ENCODE measurements at regions of chrX and their contacts with region 1.

Region 1: GRCh38 chrX:53284684-53285447 is 3.5 kb upstream of the IQSEC2 start:
- DNase-seq: peak; percentile 59
- ATAC-seq: peak; percentile 46
- H3K4me3 Mint-ChIP-seq: no peak overlapping the region
- H3K27ac Mint-ChIP-seq: no peak overlapping the region
- H3K4me1 Mint-ChIP-seq: peaks cover 34% of the 10 kb centered on the region
- H3K27me3 Mint-ChIP-seq: no peaks in the 10 kb centered on the region

Region 2: GRCh38 chrX:53244610-53245009 is 40.3 kb before region 1 on chrX:
- CTCF ChIA-PET with region 1: no interaction called
- DNase-seq: no peak
- ATAC-seq: no peak
- H3K4me3 Mint-ChIP-seq: no peak overlapping the region
- H3K27ac Mint-ChIP-seq: no peak overlapping the region
- H3K4me1 Mint-ChIP-seq: peaks cover 2% of the 10 kb centered on the region
- H3K27me3 Mint-ChIP-seq: peaks cover 3% of the 10 kb centered on the region

Region 3: GRCh38 chrX:53262918-53263394 is 21.9 kb before region 1 on chrX:
- CTCF ChIA-PET with region 1: interaction called, 14 read pairs
- DNase-seq: peak; percentile 63
- ATAC-seq: peak; percentile 58
- H3K4me3 Mint-ChIP-seq: no peak overlapping the region
- H3K27ac Mint-ChIP-seq: peak overlapping the region; percentile 35
- H3K4me1 Mint-ChIP-seq: peaks cover 44% of the 10 kb centered on the region
- H3K27me3 Mint-ChIP-seq: peaks cover 13% of the 10 kb centered on the region

Region 4: GRCh38 chrX:53433651-53434639 is 149.1 kb after region 1 on chrX and contains the start of gene HSD17B10:
- CTCF ChIA-PET with region 1: interaction called, 11 read pairs
- DNase-seq: peak; percentile 92
- ATAC-seq: peak; percentile 96
- H3K4me3 Mint-ChIP-seq: peak within 1 kb of the TSS; percentile 98
- H3K27ac Mint-ChIP-seq: peak within 1 kb of the TSS; percentile 90
- H3K4me1 Mint-ChIP-seq: peaks cover 43% of the 10 kb centered on the region
- H3K27me3 Mint-ChIP-seq: no peaks in the 10 kb centered on the region
- total RNA-seq, gene HSD17B10: 111 to 147 TPM

Region 5: GRCh38 chrX:53660004-53660403 is 375.1 kb after region 1 on chrX:
- CTCF ChIA-PET with region 1: no interaction called
- DNase-seq: no peak
- ATAC-seq: no peak
- H3K4me3 Mint-ChIP-seq: no peak overlapping the region
- H3K27ac Mint-ChIP-seq: no peak overlapping the region
- H3K4me1 Mint-ChIP-seq: peaks cover 28% of the 10 kb centered on the region
- H3K27me3 Mint-ChIP-seq: no peaks in the 10 kb centered on the region